GM10248 (cell line): ENCODE measurements at regions of chr2 and their contacts with region 1.

Region 1: GRCh38 chr2:216092646-216093045 is 10.9 kb downstream of the TMEM169 start:
- DNase-seq: no peak
- CTCF ChIP-seq: no peak

Region 2: DNA sequence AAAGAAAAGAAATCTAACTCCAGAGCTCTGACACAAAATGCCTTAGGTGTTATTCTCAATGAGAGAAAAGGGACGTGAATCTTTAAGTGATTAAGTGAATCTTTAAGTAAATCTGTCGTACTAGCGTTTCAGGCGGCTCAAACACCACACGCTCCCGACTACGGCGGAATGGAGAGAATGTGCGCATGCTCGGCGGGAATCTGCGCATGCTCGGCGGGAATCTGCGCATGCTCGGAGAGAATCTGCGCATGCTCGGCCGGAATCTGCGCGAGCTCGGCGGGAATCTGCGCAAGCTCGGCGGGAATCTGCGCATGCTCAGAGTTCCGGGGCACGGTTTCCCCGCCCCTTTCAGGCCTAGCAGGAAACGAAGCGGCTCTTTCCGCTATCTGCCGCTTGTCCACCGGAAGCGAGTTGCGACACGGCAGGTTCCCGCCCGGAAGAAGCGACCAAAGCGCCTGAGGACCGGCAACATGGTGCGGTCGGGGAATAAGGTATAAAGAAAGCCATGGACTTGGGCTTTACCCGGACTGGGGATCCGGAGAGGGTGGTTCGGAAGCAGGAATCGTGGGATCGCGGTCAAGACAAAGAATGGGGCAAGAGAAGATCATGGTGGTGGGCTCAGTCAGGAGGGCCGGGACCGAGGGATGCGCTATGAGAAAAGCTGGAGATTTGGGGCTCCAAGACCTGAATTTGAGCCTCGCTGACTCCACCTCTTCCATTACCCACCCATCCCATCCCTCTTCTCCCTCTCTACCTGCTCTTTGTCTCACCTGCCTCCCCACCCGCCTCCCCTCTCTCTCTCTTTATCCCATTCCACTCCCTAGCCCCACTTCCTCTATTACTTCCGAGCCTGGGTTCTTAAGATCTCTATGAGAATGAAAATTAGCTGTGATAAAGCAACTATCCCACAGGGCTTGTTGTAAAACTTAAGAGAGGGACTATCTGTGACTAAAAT is 16.6 kb after region 1 on chr2 and contains the start of gene XRCC5:
- CTCF ChIA-PET with region 1: interaction called, 17 read pairs
- POLR2A ChIA-PET with region 1: no interaction called
- DNase-seq: peak; percentile 93
- CTCF ChIP-seq: no peak

Region 3: DNA sequence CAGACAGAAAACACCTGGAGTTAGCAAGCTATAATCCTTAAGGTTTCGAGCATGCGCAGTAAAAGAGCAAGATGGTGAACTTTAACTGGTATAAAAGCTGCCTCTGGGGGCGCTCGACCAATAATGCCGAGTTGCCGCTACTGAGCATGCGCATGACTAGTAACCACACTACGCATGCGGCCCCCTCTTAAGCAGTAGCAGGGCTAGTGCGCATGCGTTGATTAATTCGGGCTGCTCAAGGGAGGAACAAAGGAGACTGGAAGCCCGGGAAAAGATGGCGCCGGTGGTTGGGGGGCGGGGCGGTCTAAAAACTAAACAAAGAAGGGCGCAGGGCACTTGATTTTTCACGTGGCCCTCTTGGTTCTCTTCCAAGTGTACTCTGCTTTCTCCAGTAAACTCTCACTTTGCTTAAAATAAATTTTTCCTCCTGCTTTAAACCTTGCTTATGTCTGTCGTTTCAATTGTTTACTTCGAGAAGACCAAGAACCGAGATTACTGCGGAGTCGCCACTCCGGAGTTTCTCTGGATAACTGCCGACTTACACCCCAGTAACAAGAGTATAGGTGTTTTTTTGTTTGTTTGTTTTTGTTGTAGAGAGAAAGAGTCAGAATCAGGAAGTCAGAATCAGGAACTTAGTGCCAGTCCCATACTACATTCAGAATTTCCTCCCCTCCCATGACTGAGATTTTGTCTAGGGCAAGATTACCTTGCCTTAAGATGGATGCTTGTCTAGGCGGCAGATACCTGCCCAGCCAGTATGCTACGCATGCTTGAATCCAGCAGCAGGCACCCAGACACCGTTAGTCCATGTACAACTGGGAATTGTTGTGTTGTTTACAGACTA is 22.3 kb after region 1 on chr2:
- CTCF ChIA-PET with region 1: interaction called, 14 read pairs
- POLR2A ChIA-PET with region 1: no interaction called
- DNase-seq: peak; percentile 92
- CTCF ChIP-seq: peak; percentile 76

Region 4: DNA sequence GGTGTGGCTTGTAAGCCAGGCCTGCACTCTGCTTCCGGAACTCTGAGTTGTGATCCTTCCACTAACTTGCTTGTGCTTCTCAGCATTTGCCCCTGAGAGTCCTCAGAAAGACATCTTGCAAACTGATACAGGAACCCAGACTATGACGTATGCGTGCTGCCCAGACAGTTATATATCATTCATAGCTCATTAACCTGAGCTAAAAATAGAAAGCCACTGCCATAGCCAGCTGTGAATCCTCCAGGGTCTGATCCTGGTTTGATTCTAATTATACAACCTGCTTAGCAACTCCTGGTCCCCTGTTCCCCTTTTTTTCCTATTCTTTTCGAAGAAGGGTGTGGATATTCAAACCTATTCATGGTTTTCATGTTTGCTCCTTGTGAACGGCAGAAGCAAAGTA is 215.9 kb after region 1 on chr2:
- CTCF ChIA-PET with region 1: no interaction called
- POLR2A ChIA-PET with region 1: no interaction called
- DNase-seq: no peak
- CTCF ChIP-seq: no peak